Activated T-helper 2 cell treated with anti-CD3 and anti-CD28 coated beads, Interferon-gamma antibody, Interleukin-2, Interleukin-4, amounts not matched to agents 10 μg/mL and 5 μg/mL and 100 μg/mL, durations not matched to agents 14 hours and 24 hours and 36 hours (primary cell): ENCODE measurements at regions of chr3 and their contacts with region 1.

Region 1: DNA sequence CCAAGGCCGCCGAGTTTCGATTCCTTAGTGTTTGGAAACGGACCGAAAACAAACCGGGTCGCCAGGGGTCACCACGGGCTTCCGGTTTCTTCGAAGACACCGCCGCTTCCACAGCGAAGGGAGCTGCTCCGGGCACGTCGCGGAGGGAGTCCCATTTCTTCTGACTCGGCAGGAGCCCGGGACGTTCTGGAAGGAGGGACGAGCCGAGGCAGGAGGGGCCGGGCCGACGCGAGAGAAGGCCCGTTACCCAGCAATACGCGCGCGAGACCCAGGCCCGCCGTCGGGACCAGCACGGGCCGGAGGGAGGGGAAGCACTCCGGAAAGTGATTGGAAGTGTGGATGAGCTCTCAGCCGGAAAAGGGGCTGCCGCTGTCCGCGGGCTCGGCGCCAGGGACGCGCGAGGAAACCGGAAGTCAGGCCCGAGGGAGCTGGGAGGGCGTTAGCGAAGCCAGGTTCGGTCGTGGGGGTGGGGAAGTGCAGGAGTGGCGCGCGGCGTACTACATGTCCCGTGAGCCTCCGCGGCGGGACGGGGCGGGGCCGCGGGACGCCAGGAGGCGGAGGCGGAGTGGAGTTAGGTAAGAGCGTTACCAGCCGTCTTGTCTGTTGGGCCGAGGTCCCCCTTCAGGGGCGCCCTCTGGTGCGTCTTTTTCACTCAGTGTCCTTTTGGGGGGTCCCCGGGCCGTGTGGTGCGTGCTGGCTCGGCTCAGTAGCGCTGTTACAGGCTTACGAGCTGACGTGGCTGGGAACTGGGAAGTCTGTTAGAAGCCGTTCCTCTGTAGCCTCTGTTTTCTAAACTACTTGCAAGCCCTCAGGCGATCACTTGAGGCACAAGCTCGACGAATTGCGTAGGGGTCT is at the starts of genes AZI2 and ZCWPW2:
- DNase-seq: peak; percentile 89
- H3K4me3 Mint-ChIP-seq: peak within 1 kb of the TSS; percentile 94
- H3K27ac Mint-ChIP-seq: peak within 1 kb of the TSS; percentile 98
- H3K4me1 Mint-ChIP-seq: peaks cover 48% of the 10 kb centered on the region
- H3K27me3 Mint-ChIP-seq: no peaks in the 10 kb centered on the region
- total RNA-seq, gene AZI2: 35.6 and 37.5 TPM in 2 replicates
- total RNA-seq, gene ZCWPW2: 0.14 and 0.16 TPM in 2 replicates

Region 2: DNA sequence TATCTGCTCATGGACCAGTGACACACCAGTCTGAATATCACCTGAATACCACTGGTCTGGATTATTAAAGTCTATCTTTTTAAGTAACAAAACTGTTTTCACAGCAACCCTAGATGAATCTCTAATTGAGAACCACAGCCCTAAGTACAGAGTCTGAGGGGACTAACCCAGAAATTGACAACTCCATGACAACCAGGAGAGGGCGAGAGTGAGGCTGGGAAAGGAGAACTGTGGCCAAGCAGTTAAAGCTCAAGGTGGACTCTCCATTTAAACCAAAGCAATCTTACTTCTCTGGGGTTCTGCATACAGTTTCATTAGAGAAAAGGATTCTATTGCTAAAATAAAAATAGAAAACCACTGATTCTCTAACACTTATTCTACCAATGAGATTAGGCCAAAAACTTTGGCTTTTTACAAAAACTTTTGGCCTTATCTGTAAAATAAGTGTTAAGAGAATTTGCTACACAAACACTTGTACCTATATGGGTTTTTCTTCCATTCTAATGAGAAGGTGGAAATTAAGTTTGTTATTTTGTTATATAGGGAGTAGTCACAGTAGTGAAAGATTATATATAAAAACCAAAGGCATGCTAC is 991.1 kb before region 1 on chr3:
- intact Hi-C with region 1: loop called (anchors 10 kb)
- DNase-seq: peak; percentile 39
- H3K4me3 Mint-ChIP-seq: no peak overlapping the region
- H3K27ac Mint-ChIP-seq: no peak overlapping the region
- H3K4me1 Mint-ChIP-seq: peaks cover 35% of the 10 kb centered on the region
- H3K27me3 Mint-ChIP-seq: peaks cover 2% of the 10 kb centered on the region

Region 3: DNA sequence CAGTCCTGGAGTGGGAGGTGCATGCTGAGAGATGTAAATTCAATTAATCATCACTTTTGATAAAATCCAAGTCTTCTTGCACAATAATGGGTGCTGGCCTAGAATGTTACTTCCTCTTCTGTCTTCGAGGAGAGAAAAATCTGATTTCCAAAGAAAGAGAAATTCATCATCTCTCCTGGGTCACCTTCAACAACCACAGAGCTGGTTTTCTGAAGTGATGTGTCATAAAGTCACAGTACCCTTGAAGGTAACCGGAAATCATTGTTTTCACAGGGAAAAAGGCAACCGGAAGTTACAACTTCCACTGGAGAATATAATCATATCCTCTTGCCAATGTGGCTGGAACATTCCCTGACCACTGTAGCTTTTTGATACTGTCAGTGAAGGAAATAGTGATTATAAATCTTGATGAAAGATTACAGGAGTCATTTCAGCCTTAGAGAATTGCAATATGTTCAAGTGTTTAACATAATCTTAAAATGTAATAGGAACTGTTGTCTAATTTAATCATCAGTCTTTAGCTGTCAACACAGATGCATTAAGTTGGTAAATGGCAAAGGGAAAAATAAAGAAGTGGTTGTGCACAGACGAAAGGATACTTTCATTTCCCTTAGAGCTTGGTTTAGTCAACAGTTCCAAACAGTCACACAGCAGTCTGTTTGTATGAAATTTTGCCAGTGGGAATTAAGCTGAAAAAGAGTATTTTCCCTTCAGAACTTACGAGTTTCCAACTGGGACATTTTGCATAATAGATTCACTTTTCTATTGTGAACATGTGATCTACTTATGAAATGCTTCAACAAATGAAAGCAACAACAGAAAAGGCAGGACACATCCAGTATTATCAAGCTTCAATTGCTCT is 758.2 kb before region 1 on chr3:
- intact Hi-C with region 1: loop called (anchors 2 kb)
- DNase-seq: no peak
- H3K4me3 Mint-ChIP-seq: peak overlapping the region; percentile 38
- H3K27ac Mint-ChIP-seq: peak overlapping the region; percentile 81
- H3K4me1 Mint-ChIP-seq: peaks cover 32% of the 10 kb centered on the region
- H3K27me3 Mint-ChIP-seq: no peaks in the 10 kb centered on the region

Region 4: DNA sequence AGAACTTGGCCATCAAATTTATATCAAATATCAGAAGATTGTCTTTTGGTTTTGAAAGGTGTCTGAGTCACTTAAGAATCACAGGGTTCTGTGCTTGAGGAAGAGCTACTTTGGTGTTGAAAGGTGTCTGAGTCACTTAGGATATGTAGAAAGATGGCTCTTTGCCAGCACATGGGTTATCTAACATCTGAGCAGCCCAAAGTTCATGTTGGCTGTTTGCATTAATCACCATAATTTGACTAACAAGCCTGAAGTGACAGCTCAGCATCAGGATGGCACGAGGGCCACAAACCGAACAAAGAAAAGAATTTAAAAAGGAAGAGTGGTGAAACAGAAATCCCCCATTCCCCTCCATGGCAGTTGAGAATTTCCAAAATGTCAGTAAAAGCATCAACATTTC is 298.0 kb before region 1 on chr3:
- intact Hi-C with region 1: loop called (anchors 1 kb)
- DNase-seq: no peak
- H3K4me3 Mint-ChIP-seq: no peak overlapping the region
- H3K27ac Mint-ChIP-seq: peak overlapping the region; percentile 79
- H3K4me1 Mint-ChIP-seq: peaks cover 26% of the 10 kb centered on the region
- H3K27me3 Mint-ChIP-seq: peaks cover 9% of the 10 kb centered on the region

Region 5: DNA sequence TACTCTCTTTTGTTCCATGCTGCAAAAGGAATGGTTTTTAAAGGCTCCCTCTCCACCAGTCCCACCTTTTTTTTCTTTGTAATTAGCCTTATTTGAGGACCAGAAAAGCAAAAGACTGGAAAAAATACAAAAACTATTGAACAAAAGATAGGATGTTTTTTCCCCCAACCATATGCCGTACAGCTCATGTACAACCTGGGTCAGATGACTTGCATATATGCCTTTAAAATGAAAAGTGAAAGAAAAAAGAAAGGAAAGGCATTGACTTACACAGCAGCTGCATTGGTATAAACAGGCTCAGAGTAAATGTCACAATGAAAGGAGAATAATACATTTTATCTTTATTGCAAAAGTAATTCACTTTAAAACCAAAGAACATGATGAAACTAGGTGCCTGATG is 176.9 kb before region 1 on chr3:
- intact Hi-C with region 1: no loop called
- DNase-seq: no peak
- H3K4me3 Mint-ChIP-seq: peak overlapping the region; percentile 49
- H3K27ac Mint-ChIP-seq: peak overlapping the region; percentile 86
- H3K4me1 Mint-ChIP-seq: peaks cover 12% of the 10 kb centered on the region
- H3K27me3 Mint-ChIP-seq: peaks cover 2% of the 10 kb centered on the region

Region 6: GRCh38 chr3:28317438-28318022 is 31.3 kb before region 1 on chr3:
- intact Hi-C with region 1: loop called (anchors 2 kb)
- DNase-seq: peak; percentile 16
- H3K4me3 Mint-ChIP-seq: no peak overlapping the region
- H3K27ac Mint-ChIP-seq: no peak overlapping the region
- H3K4me1 Mint-ChIP-seq: peaks cover 19% of the 10 kb centered on the region
- H3K27me3 Mint-ChIP-seq: no peaks in the 10 kb centered on the region

Region 7: DNA sequence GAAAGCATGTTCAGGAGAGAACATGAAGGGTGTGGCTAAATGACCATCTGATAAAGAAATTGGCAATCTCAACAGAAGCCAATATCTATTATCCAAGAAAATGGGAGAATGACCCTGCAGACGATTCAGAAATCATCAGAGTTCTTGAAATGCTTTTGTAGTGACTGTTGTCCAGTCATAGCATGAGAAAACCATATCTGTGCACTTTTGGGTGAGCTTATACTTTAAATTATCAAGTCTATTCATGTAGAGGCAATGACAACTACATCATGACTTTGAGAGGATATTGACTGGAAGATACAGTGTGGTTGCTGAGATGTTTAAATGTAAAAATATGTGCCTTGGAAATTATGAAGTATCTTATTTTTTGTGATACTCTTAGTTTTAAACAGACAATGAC is 57.4 kb after region 1 on chr3:
- intact Hi-C with region 1: no loop called
- DNase-seq: no peak
- H3K4me3 Mint-ChIP-seq: no peak overlapping the region
- H3K27ac Mint-ChIP-seq: no peak overlapping the region
- H3K4me1 Mint-ChIP-seq: no peaks in the 10 kb centered on the region
- H3K27me3 Mint-ChIP-seq: no peaks in the 10 kb centered on the region

Region 8: DNA sequence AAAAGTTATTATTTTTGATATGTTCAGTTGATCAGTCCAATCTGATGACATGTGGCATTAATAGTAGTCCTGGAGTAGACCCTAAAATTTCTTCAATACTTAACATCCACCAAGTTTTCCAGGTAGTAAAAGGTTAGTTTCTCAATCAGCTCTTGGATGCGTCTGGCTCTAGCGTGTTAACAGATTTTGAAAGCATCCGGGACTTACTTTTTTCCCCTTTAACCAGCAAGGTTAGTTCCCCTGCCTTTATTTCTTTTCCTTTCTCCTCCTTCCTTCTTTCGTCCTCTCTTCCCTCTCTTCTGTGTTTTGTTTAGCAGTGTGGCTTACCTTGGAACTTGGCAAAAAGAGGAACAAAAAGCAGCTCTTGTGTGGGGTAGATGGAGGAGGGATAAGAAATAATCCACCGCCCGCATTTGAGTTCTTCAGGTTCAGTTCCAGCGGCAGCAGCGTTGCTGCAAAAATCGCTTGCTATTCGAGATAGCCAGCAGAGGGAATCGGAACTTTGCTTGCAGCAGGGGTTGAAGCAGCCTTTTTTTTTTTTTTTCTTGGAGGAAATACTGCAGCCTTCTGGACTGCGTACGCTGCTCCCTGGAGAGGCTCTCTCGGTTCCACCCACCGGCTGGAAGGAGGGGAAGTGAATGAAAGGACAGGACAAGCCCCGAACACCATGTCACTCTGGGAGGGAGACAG is 931.7 kb after region 1 on chr3 and contains the start of gene RBMS3:
- intact Hi-C with region 1: loop called (anchors 5 kb)
- DNase-seq: no peak
- H3K4me3 Mint-ChIP-seq: peak within 1 kb of the TSS; percentile 80
- H3K27ac Mint-ChIP-seq: peak within 1 kb of the TSS; percentile 67
- H3K4me1 Mint-ChIP-seq: peaks cover 30% of the 10 kb centered on the region
- H3K27me3 Mint-ChIP-seq: peaks cover 19% of the 10 kb centered on the region
- total RNA-seq, gene RBMS3: 4.5 and 5.3 TPM in 2 replicates